HEK293T (cell line): ENCODE measurements at regions of chr3 and their contacts with region 1.

Region 1: GRCh38 chr3:93973131-93974126 is at the start of gene PROS1:
- DNase-seq: peak; percentile 64

Region 2: DNA sequence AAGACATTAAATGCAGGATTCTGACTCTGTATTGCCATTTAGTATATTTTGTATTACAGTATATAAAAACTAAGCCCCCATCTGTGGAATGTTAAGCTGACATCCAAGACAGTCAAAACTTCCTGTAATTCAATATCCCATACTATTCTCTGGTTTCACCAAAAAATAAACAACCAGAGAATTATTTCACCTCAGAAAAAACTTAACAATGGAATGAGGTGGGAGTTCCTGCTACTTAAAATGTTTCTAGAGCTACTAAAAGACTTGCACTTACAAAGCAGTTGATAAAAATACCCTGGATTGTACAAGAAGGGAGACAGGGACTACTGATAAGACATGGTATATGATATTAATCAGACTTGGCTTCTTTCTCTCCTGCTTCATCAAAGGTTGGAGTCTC is 14.9 kb after region 1 on chr3:
- CTCF ChIA-PET with region 1: no interaction called
- POLR2A ChIA-PET with region 1: interaction called, 15 read pairs
- DNase-seq: no peak

Region 3: DNA sequence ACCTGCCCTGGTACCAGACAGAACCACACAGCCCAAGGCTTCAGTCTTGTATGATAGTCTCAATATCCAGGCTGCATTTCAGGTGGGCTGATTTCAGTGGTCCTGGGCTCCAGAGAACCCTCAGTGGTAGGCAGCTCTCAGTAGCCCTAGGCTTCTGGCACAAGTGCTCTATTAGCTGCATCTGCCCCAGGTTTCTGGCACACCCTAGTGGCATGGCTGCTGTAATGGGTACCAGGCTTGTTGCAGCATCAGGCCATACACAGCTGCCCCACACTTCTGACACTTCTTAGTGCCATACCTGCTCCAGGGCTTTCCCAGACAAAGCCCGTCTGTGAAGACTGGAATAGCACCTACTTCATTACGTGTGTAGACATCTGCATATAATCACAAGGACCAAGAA is 1778.8 kb after region 1 on chr3:
- CTCF ChIA-PET with region 1: interaction called, 11 read pairs
- POLR2A ChIA-PET with region 1: no interaction called
- DNase-seq: no peak